ENCODE measurements at regions of chr6 and their contacts with region 1.

Region 1: DNA sequence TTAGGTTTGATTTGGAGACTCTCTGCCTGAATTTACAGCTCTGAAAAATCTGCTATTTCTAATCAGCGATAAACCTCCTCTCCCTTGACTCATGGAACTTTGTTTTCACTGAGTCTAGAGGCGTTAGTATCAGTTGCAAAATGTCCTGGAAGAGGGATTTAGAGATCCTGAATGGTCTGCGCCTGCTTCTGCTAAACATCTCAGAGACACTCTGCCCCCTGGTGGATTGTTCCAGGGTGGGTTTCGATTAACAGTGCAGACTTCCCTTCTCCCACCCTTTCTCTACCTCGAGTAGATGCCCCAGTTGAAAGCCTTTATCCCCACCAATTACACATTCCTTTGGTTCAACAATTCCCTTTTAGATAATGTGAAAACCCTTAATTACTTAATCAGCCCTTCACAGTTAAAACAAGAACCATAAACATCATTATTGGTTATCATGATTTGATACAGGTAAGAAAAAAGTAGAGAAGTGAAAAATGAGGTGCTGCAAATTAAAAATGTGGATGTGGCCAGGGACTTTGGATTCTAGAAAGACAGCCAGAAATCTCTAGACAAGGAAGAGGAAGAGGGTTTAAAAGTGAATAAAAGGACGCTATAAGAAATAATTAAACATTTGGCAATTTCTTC is 5.5 kb downstream of the HTR1B start:
- DNase-seq: peak; percentile 85
- ATAC-seq: peak; percentile 82
- H3K4me3 Mint-ChIP-seq: no peak overlapping the region
- H3K27ac Mint-ChIP-seq: 0 out of 2 replicates have a peak overlapping the region, but pooled peaks have one; percentile 13
- H3K4me1 Mint-ChIP-seq: peaks cover 64% of the 10 kb centered on the region
- H3K27me3 Mint-ChIP-seq: peaks cover 14% of the 10 kb centered on the region
- CTCF ChIP-seq: peak; percentile 82

Region 2: DNA sequence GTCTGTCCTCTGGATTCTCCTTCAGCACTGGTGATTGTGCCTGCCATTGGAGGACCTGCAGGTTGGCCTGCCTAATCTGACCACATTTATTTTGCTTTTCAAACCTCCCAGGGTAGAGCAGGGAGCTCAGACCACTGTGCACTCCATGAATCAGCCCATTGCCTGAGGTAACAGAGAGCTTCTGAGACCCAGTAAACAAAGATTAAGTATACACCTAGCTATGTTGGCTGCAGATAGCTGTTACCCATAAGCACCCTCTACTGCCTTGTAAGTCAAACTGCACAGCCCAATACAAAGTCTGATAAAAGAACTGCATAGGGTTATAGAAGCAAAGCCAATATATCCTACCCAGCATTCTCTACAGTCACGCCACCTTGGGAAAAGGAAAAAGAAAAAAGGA is 333.2 kb before region 1 on chr6:
- CTCF ChIA-PET with region 1: no interaction called
- POLR2A ChIA-PET with region 1: no interaction called
- DNase-seq: no peak
- ATAC-seq: peak; percentile 60; the same call in 1 of the 2 replicates
- H3K4me3 Mint-ChIP-seq: no peak overlapping the region
- H3K27ac Mint-ChIP-seq: no peak overlapping the region; the same call in 1 of the 2 replicates
- H3K4me1 Mint-ChIP-seq: no peaks in the 10 kb centered on the region
- H3K27me3 Mint-ChIP-seq: no peaks in the 10 kb centered on the region
- CTCF ChIP-seq: no peak

Region 3: DNA sequence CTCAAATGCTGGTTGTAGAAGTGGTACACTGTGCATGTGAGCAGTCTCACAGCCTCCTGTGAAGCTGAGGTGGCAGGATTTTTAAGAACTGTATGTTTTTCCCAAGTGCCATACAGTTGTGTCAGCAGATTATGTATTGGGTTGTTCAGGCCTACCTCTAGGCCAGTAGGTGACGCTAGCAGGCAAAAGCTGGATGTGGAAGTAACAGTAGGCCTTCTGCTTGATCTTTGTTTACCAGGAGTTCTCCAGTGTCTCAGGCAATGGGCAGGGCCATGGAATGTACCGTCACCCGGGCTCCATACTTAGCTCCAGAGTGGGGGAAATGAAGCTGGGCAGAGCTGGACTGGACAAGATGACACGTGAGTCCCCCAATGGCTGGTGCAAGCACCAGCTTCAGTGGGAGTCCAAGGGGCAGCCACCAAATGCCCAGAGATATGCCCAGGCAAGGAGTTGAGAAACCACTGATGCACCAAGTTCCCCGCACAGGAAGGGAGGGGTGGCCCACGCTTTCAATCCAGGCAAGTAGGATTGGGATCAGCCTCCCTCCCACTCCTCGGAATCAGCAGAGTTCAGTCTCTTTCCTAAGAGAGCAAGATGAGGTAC is 284.3 kb before region 1 on chr6:
- CTCF ChIA-PET with region 1: interaction called, 13 read pairs
- POLR2A ChIA-PET with region 1: interaction called, 4 read pairs
- DNase-seq: peak; percentile 50
- ATAC-seq: peak; percentile 99
- H3K4me3 Mint-ChIP-seq: no peak overlapping the region
- H3K27ac Mint-ChIP-seq: peak overlapping the region; percentile 7; the same call in 1 of the 2 replicates
- H3K4me1 Mint-ChIP-seq: 0 out of 2 replicates have a peak, but pooled peaks cover 2% of the 10 kb centered on the region
- H3K27me3 Mint-ChIP-seq: no peaks in the 10 kb centered on the region
- CTCF ChIP-seq: peak; percentile 35; the same call in 1 of the 2 replicates

Measured in WTC11 (cell line).